GM10248 (cell line): ENCODE measurements at regions of chr5 and their contacts with region 1.

Region 1: DNA sequence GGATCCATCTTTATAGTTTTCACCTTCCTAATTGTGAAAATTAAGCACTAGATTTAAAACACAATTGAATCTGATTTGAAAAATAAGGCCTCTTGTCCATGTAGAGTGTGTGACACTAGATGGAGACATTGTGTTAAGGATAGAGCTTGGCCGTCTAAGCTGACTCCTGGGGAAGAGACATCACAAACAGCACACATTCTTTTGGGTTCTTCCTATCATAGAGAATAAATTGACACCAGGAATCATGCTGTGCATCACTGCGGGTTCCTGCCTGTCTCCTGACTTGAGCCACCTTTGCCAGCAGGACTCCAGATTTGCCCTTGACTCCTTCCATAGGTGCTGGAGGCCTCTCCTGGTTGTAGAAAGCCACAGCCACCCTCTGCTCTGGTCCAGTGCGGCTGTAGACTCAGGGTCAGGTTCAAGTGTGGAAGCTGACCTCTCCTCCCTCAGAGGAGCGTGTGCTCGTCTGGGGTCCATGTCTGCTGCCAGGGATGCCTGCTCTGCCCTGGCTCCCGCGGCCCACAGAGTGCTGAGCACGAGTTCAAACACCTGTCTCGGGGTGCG is 11.2 kb downstream of the ROPN1L start:
- DNase-seq: peak; percentile 82
- CTCF ChIP-seq: peak; percentile 78

Region 2: DNA sequence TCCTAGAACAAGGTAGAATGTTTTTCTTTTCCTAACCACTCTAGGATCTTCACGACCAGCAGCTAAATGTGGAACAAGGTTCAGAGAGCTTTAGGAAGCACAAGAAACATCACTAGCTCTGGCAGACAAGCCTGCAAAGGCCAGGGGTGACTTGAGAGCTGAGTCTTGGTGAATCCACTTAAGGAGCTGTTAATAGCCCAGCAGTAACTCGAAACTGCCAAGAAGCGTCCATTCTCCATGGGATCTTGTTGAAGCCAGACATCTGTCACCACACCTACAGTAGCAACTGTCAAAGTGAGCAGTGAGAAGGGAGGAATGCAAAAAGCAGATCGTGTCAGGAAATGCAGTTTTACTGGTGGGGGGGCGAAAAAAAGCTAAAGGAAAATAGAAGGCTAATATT is 290.4 kb before region 1 on chr5:
- CTCF ChIA-PET with region 1: no interaction called
- POLR2A ChIA-PET with region 1: no interaction called
- DNase-seq: no peak
- CTCF ChIP-seq: no peak

Region 3: GRCh38 chr5:10441083-10441991 is 11.5 kb before region 1 on chr5 and contains the start of gene ROPN1L:
- CTCF ChIA-PET with region 1: interaction called, 46 read pairs
- POLR2A ChIA-PET with region 1: no interaction called
- DNase-seq: peak; percentile 96
- CTCF ChIP-seq: no peak

Region 4: GRCh38 chr5:10564838-10565784 is 112.3 kb after region 1 on chr5:
- CTCF ChIA-PET with region 1: interaction called, 13 read pairs
- POLR2A ChIA-PET with region 1: no interaction called
- DNase-seq: no peak
- CTCF ChIP-seq: no peak

Region 5: DNA sequence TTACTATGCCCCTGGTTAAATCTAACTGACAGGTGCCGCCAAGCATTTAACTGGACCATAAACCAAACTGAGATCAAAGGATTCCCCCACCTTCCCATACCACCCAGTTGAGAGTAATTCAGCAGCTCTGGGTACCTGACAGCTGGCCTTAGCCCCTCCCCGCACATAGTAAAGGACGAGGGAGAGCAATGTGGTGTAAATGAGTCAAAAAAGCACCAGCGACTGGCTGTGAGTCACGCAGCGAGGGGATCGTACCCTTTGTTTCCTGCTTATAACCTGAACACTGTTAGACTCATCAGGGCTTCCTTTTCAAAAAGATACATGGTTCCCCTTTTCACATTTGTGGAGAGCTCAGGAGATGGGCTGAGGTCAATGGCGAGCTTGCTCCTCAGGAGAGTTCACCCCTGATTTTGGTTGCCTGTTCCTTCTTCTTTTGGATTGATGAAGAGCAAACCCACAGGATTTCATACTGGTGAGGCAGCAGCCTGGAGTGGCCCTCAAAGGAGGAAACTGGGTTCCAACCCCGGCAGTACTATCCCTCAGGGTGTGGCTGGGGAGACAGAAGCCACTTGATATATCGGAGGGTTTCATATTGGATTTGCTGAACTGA is 182.5 kb after region 1 on chr5:
- CTCF ChIA-PET with region 1: interaction called, 17 read pairs
- POLR2A ChIA-PET with region 1: no interaction called
- DNase-seq: peak; percentile 85
- CTCF ChIP-seq: no peak

Region 6: GRCh38 chr5:10695055-10695649 is 242.3 kb after region 1 on chr5:
- CTCF ChIA-PET with region 1: interaction called, 65 read pairs
- POLR2A ChIA-PET with region 1: no interaction called
- DNase-seq: peak; percentile 69
- CTCF ChIP-seq: peak; percentile 87

Region 7: DNA sequence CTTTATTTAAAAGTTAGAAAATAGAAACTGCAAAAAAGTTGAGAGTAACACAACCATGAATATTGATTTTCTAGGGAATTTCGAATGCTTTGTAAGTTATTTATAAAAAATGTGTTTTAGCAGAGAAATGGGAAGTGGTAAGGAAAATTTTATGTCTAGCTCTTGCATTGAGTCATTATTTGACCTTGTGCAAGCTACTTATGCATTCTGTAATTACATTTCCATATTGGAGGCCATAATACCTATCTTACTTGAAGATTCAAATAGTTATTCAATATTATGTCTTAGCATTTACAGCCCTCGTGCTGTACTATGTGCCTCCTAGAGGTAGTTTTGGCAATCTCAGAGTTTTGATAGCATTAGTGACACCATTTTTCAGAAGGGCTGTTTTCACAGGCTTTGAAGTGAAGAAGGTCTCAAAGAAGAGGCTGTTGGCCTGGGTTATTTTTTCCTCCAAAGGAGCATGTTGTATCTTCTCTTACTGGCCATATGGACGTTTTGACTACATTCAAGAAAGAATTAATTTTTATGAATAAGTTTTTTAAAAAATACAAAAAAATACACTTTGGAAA is 315.6 kb after region 1 on chr5:
- CTCF ChIA-PET with region 1: interaction called, 10 read pairs
- POLR2A ChIA-PET with region 1: no interaction called
- DNase-seq: no peak
- CTCF ChIP-seq: no peak